CD4-positive, alpha-beta memory T cell (primary cell): ENCODE measurements at regions of chr9 and their contacts with region 1.

Region 1: DNA sequence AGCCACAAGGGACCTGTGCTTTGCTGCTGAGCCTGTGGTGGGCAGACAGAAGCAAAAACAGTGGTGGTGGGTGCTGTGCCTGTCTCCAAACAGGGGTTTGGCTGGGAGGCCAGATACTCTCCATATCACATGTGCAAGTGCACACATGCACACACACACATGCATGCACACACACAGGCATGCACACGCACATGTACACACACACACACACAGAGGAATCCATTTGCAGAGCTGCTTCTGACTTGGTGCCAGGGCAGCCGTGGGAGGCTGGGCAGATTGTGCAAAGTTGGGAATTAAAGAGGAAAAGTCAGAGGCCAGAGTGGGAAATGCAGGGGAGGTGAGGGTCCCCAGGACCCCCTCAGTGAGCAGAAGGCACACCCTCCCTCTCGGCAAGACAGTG is 71.3 kb downstream of the NTNG2 start:
- DNase-seq: no peak
- H3K4me3 ChIP-seq: no peak overlapping the region
- H3K4me3 Mint-ChIP-seq: no peak overlapping the region
- H3K27ac ChIP-seq: no peak overlapping the region
- H3K27ac Mint-ChIP-seq: peak overlapping the region in 1 of 7 donors; percentile 29
- H3K4me1 ChIP-seq: peaks cover 6% of the 10 kb centered on the region
- H3K4me1 Mint-ChIP-seq: peaks cover 2 to 7% (median 5%) of the 10 kb centered on the region in 4 donors
- H3K27me3 ChIP-seq: no peaks in the 10 kb centered on the region
- H3K27me3 Mint-ChIP-seq: peaks cover 0 to 4% of the 10 kb centered on the region in 2 donors

Region 2: GRCh38 chr9:131839281-131840084 is 393.7 kb before region 1 on chr9:
- CTCF ChIA-PET with region 1: no interaction called
- POLR2A ChIA-PET with region 1: no interaction called
- intact Hi-C with region 1: no loop called
- DNase-seq: peak; percentile 37 to 81 (median 59)
- H3K4me3 ChIP-seq: no peak overlapping the region
- H3K4me3 Mint-ChIP-seq: peak overlapping the region; percentile 4 to 77 (median 50)
- H3K27ac ChIP-seq: no peak overlapping the region
- H3K27ac Mint-ChIP-seq: peak overlapping the region; percentile 90 to 98 (median 94)
- H3K4me1 ChIP-seq: peaks cover 23% of the 10 kb centered on the region
- H3K4me1 Mint-ChIP-seq: peaks cover 3 to 22% (median 10%) of the 10 kb centered on the region in 4 donors
- H3K27me3 ChIP-seq: no peaks in the 10 kb centered on the region
- H3K27me3 Mint-ChIP-seq: peaks cover 0 to 7% of the 10 kb centered on the region in 2 donors

Region 3: GRCh38 chr9:132087438-132088030 is 145.6 kb before region 1 on chr9:
- CTCF ChIA-PET with region 1: no interaction called
- POLR2A ChIA-PET with region 1: no interaction called
- intact Hi-C with region 1: no loop called
- DNase-seq: no peak
- H3K4me3 ChIP-seq: no peak overlapping the region
- H3K4me3 Mint-ChIP-seq: no peak overlapping the region
- H3K27ac ChIP-seq: no peak overlapping the region
- H3K27ac Mint-ChIP-seq: no peak overlapping the region
- H3K4me1 ChIP-seq: no peaks in the 10 kb centered on the region
- H3K4me1 Mint-ChIP-seq: no peaks in the 10 kb centered on the region
- H3K27me3 ChIP-seq: no peaks in the 10 kb centered on the region
- H3K27me3 Mint-ChIP-seq: peaks cover 10 to 29% of the 10 kb centered on the region in 2 donors

Region 4: GRCh38 chr9:132169672-132170392 is 63.3 kb before region 1 on chr9:
- CTCF ChIA-PET with region 1: interaction called, 69 read pairs
- POLR2A ChIA-PET with region 1: interaction called, 4 read pairs
- intact Hi-C with region 1: loop called (anchors 1 kb)
- DNase-seq: peak in 4 of 5 donors; percentile 42 to 55 (median 44)
- H3K4me3 ChIP-seq: no peak overlapping the region
- H3K4me3 Mint-ChIP-seq: peak overlapping the region in 1 of 8 donors; percentile 20
- H3K27ac ChIP-seq: no peak overlapping the region
- H3K27ac Mint-ChIP-seq: peak overlapping the region in 2 of 7 donors; percentile 31 to 32
- H3K4me1 ChIP-seq: no peaks in the 10 kb centered on the region
- H3K4me1 Mint-ChIP-seq: no peaks in the 10 kb centered on the region
- H3K27me3 ChIP-seq: peaks cover 5% of the 10 kb centered on the region
- H3K27me3 Mint-ChIP-seq: peaks cover 29 to 34% of the 10 kb centered on the region in 2 donors

Region 5: DNA sequence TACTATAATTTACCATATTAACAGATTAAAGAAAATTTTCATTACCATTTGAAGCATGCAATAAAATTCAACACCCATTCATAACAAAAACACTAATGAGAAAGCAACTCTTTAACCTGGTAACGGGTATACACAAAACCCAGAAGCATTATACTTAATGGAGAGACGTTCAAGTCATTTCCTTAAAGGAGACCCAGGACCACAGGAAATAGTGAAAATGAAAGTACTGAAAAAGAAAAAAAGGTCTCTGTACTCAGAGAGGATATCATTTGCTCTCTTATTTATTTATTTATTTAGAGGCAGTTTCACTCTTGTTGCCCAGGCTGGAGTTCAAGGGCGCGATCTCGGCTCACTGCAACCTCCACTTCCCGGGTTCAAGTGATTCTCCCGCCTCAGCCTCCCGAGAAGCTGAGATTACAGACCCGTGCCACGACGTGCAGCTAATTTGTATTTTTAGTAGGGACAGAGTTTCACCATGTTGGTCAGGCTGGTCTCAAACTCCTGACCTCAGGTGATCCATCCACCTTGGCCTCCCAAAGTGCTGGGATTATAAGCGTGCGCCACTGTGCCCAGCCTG is 60.1 kb after region 1 on chr9:
- CTCF ChIA-PET with region 1: no interaction called
- POLR2A ChIA-PET with region 1: no interaction called
- intact Hi-C with region 1: no loop called
- DNase-seq: peak in 4 of 5 donors; percentile 8 to 30 (median 13)
- H3K4me3 ChIP-seq: no peak overlapping the region
- H3K4me3 Mint-ChIP-seq: peak overlapping the region in 6 of 8 donors; percentile 43 to 62 (median 54)
- H3K27ac ChIP-seq: no peak overlapping the region
- H3K27ac Mint-ChIP-seq: peak overlapping the region; percentile 30 to 86 (median 79)
- H3K4me1 ChIP-seq: peaks cover 7% of the 10 kb centered on the region
- H3K4me1 Mint-ChIP-seq: peaks cover 13 to 34% (median 26%) of the 10 kb centered on the region in 4 donors
- H3K27me3 ChIP-seq: no peaks in the 10 kb centered on the region
- H3K27me3 Mint-ChIP-seq: no peaks in the 10 kb centered on the region

Region 6: GRCh38 chr9:132319421-132320110 is 86.4 kb after region 1 on chr9:
- CTCF ChIA-PET with region 1: no interaction called
- POLR2A ChIA-PET with region 1: no interaction called
- intact Hi-C with region 1: no loop called
- DNase-seq: no peak
- H3K4me3 ChIP-seq: no peak overlapping the region
- H3K4me3 Mint-ChIP-seq: peak overlapping the region in 2 of 8 donors; percentile 9 to 12
- H3K27ac ChIP-seq: no peak overlapping the region
- H3K27ac Mint-ChIP-seq: peak overlapping the region; percentile 8 to 83 (median 48)
- H3K4me1 ChIP-seq: peaks cover 23% of the 10 kb centered on the region
- H3K4me1 Mint-ChIP-seq: peaks cover 31 to 47% (median 34%) of the 10 kb centered on the region in 4 donors
- H3K27me3 ChIP-seq: no peaks in the 10 kb centered on the region
- H3K27me3 Mint-ChIP-seq: no peaks in the 10 kb centered on the region